Activated naive CD4-positive, alpha-beta T cell treated with anti-CD3 and anti-CD28 coated beads for 36 hours (primary cell): ENCODE measurements at regions of chr18 and their contacts with region 1.

Region 1: DNA sequence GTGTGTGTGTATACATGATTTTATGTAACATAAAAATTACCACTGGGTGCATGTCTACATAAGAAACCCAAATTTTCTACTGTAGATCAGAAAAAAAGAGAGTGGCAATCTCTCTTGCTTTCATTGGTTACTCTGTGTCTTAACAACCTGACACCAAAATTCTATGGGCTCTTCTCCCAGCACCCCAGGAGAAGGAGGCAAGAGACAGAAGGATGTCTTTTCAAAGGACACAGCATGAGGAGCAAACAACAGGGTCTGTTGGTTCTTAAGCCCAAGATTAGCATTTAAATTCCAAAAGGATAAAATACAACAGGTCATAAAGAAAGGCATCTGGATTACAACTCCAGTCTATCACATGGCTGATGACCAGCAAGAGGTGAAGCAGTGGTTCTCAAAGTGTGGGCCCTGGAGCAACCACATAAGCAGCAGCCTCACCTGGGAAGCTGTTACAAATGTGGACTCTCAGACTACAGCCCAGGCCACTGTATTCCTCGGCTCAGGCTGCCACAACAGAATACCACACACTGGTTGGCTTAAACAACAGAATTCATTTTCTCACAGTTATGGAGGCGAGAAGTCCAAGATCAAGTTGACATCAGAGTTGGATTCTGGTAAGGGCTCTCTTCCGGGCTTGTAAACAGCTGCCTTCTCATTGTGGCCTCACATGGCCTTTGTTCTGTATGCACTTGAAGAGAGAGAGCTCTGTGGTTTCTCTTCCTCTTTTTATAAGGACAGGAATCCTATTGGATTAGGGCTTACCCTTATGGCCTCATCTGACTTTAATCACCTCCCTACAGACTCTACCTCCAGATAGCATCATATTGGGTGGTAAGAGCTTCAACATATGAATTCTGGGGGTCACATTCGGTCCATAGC is 79.8 kb upstream of the RNF152 start:
- DNase-seq: no peak
- H3K4me3 Mint-ChIP-seq: no peak overlapping the region
- H3K27ac Mint-ChIP-seq: no peak overlapping the region
- H3K4me1 Mint-ChIP-seq: peaks cover 16% of the 10 kb centered on the region
- H3K27me3 Mint-ChIP-seq: no peaks in the 10 kb centered on the region

Region 2: GRCh38 chr18:61917818-61918217 is 54.8 kb before region 1 on chr18:
- CTCF ChIA-PET with region 1: no interaction called
- intact Hi-C with region 1: loop called (anchors 2 kb)
- DNase-seq: no peak
- H3K4me3 Mint-ChIP-seq: no peak overlapping the region
- H3K27ac Mint-ChIP-seq: no peak overlapping the region
- H3K4me1 Mint-ChIP-seq: peaks cover 18% of the 10 kb centered on the region
- H3K27me3 Mint-ChIP-seq: no peaks in the 10 kb centered on the region

Region 3: GRCh38 chr18:61998957-61999356 is 26.3 kb after region 1 on chr18:
- CTCF ChIA-PET with region 1: no interaction called
- intact Hi-C with region 1: loop called (anchors 2 kb)
- DNase-seq: no peak
- H3K4me3 Mint-ChIP-seq: no peak overlapping the region
- H3K27ac Mint-ChIP-seq: no peak overlapping the region
- H3K4me1 Mint-ChIP-seq: peaks cover 8% of the 10 kb centered on the region
- H3K27me3 Mint-ChIP-seq: peaks cover 7% of the 10 kb centered on the region

Region 4: GRCh38 chr18:62030091-62030985 is 57.7 kb after region 1 on chr18:
- CTCF ChIA-PET with region 1: no interaction called
- intact Hi-C with region 1: loop called (anchors 1 kb)
- DNase-seq: no peak
- H3K4me3 Mint-ChIP-seq: no peak overlapping the region
- H3K27ac Mint-ChIP-seq: no peak overlapping the region
- H3K4me1 Mint-ChIP-seq: peaks cover 21% of the 10 kb centered on the region
- H3K27me3 Mint-ChIP-seq: no peaks in the 10 kb centered on the region